Cardiac septum (tissue), 1 donor: ENCODE measurements at regions of chr20 and their contacts with region 1.

Region 1: GRCh38 chr20:32456869-32457478 is 98.8 kb downstream of the ASXL1 start:
- DNase-seq: no peak

Region 2: GRCh38 chr20:32155017-32155981 is 301.7 kb before region 1 on chr20:
- intact Hi-C with region 1: loop called (anchors 10 kb)
- DNase-seq: peak; percentile 93